GM10248 (cell line): ENCODE measurements at regions of chr5 and their contacts with region 1.

Region 1: DNA sequence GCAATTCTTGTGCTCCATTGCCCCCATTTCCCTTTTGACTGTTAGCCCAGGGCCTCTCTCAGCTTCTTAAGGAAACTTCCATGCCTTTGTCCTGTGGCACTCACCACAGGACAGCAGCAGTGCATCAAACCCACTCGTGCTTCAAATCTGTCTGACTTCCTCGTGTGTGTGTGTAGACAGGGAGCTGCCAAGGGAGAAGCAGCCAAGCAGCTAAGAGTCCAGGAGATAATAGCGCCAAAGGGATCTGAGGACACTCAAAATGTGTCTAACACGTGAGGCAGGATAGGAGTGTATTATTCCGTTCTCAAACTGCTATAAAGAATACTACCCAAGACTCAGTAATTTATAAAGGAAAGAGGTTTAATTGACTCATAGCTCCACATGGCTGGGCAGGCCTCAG is 44.8 kb downstream of the CDK7 start:
- DNase-seq: no peak
- CTCF ChIP-seq: no peak

Region 2: DNA sequence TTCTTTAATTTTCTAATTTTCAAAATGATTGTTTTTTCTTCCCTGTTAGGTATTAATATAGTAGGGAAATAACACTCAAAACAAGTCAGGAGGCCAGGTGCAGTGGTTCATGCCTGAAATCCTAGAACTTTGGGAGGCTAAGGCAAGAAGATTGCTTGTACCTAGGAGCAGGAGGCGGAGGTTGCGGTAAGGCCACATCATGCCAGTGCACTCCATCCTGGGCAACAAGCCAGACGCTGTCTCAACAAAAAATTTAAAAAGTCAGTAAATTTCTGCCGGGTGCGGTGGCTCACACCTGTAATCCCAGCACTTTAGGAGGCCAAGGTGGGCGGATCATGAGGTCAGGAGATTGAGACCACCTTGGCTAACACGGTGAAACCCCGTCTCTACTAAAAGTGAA is 55.0 kb before region 1 on chr5:
- CTCF ChIA-PET with region 1: no interaction called
- POLR2A ChIA-PET with region 1: no interaction called
- DNase-seq: no peak
- CTCF ChIP-seq: no peak

Region 3: DNA sequence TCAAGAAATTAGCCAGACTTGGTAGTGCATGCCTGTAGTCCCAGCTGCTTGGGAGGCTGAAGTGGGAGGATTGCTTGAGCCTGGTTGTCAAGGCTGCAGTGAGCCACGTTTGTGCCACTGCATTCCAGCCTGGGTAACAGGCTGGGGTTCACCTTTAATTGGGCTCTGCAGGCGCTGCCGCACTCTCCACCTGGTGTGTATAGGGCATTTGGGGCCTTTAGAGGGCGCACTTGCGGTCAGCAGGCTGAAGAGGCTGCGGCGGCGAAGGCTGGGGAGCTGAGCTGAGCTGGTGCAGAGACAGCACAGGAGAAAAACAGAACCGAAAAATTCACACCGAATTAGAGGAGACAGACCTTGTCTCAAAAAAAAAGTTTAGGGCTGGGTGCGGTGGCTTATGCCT is 13.6 kb before region 1 on chr5:
- CTCF ChIA-PET with region 1: interaction called, 12 read pairs
- POLR2A ChIA-PET with region 1: no interaction called
- DNase-seq: no peak
- CTCF ChIP-seq: peak; percentile 30